ENCODE measurements at regions of chr14 and their contacts with region 1.

Region 1: GRCh38 chr14:21087294-21088091 is 11.0 kb downstream of the ZNF219 start:
- DNase-seq: peak in 2 of 4 donors; percentile 28 to 67
- ATAC-seq: no peak
- H3K4me3 ChIP-seq: no peak overlapping the region
- H3K27ac ChIP-seq: peak overlapping the region in 1 of 4 donors; percentile 8
- H3K4me1 ChIP-seq: peaks cover 7% of the 10 kb centered on the region
- H3K27me3 ChIP-seq: no peaks in the 10 kb centered on the region
- CTCF ChIP-seq: no peak
- POLR2A ChIP-seq: no peak

Region 2: GRCh38 chr14:21014761-21015190 is 72.7 kb before region 1 on chr14:
- intact Hi-C with region 1: loop called (anchors 5 kb)
- DNase-seq: peak; percentile 87 to 91 (median 88)
- ATAC-seq: peak; percentile 93
- H3K4me3 ChIP-seq: no peak overlapping the region
- H3K27ac ChIP-seq: no peak overlapping the region
- H3K4me1 ChIP-seq: no peaks in the 10 kb centered on the region
- H3K27me3 ChIP-seq: no peaks in the 10 kb centered on the region
- CTCF ChIP-seq: peak; percentile 76 to 99 (median 97)
- POLR2A ChIP-seq: no peak

Region 3: DNA sequence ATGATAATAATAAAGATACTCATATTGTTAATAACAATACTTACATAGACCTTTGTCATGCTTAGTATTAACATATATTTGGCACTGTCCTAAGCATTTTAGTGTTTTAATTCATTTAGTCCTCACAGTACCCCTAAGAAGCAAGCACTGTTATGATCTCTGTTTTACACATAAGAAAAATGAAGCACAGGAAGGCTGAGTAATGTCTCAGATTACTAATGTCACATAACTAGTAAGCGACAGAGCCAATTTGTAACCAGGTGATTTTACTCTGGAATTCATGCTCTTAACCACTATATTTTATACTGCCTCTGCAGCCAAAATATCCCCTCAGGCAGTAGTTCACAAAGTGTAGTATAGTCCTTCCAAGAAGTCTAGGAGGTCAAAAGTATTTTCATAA is 33.6 kb after region 1 on chr14:
- intact Hi-C with region 1: no loop called
- DNase-seq: no peak
- ATAC-seq: no peak
- H3K4me3 ChIP-seq: no peak overlapping the region
- H3K27ac ChIP-seq: no peak overlapping the region
- H3K4me1 ChIP-seq: no peaks in the 10 kb centered on the region
- H3K27me3 ChIP-seq: no peaks in the 10 kb centered on the region
- CTCF ChIP-seq: no peak
- POLR2A ChIP-seq: no peak

Region 4: GRCh38 chr14:21739054-21739453 is 651.6 kb after region 1 on chr14:
- intact Hi-C with region 1: no loop called
- DNase-seq: no peak
- ATAC-seq: no peak
- H3K4me3 ChIP-seq: no peak overlapping the region
- H3K27ac ChIP-seq: no peak overlapping the region
- H3K4me1 ChIP-seq: no peaks in the 10 kb centered on the region
- H3K27me3 ChIP-seq: no peaks in the 10 kb centered on the region
- CTCF ChIP-seq: no peak
- POLR2A ChIP-seq: no peak

Measured in body of pancreas (tissue), 4 donors.